PC-9 (cell line): ENCODE measurements at regions of chr19 and their contacts with region 1.

Region 1: DNA sequence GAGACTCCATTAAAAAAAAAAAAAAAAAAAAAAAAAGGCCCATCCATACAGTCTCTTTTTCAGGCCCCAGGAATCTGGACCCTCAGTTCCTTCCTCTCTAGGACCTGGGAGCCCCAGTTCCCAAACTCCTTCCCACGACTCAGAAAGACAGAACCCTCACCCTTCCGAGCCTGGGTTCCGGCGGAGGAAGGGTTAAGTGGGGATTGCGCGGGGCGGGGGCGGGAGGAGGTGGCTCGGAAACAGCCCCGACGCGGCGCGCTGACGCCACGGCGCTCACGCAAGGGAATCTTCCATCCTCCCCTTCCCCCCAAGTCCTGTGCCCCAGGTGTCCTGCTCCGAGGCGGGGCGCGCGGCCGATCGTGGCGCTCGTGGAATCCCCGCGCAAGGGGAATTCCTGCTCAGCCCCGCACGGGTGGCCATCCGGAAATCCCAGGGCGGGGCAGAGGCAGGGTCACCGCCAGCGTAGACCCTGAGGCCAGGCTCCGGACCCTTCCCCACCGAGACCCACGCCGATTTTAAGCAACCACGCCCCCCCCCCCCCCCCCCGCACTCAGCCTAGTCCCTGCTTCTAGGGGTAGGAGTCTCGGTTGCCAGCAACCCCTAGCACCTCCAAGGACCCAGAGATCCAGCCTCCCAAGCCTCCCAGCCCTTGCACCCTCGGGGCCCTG is 659 bp downstream of the NFKBID start:
- DNase-seq: peak; percentile 62 to 74
- H3K4me3 ChIP-seq: peak overlapping the region; percentile 79
- H3K27ac ChIP-seq: peak overlapping the region; percentile 50
- H3K4me1 ChIP-seq: peaks cover 8% of the 10 kb centered on the region; the same call in 1 of the 2 replicates
- H3K27me3 ChIP-seq: no peaks in the 10 kb centered on the region
- CTCF ChIP-seq: no peak

Region 2: DNA sequence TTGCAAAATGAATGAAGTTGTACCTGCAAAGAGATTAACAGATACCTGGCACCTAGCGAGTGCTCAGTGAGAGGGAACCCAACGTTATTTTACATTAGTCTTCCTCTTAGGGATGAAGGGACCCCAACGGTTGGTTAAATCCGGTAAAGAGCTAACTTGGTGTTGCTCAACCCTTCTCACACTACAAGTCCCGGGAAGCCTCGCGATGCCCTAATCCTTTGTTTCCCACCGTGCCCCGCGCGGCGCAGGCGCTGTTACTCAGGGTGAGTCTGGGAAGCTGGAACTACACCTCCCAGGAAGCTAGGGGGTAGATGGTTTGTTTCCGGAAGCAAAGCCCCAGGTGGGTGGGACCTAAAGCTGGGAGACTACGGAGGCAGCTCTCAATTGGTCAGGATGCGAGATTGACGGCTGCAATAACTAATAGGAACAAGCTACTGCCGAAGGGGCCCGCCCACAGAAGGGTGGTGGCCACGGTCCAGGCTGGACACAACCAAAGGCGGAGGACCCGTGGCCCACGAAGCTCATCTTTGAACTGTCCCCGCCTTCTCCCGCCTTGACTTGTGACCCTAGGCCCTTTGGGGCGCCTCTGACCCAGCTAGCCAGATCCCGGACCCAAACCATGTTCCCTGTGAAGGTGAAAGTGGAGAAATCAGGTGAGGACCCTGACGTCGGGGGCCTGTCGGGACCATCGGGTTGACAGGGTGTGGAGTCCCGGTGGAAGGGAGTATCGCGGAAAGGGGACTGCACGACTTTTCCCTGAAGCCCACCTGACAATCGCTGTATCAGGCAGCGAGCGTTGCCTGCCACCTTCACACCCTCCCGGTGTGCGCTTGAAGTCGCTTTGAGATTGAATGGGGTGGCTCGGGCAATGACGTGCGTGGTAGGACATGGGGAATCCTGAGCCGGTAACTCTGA is 151.3 kb before region 1 on chr19 and contains the start of gene LIN37:
- CTCF ChIA-PET with region 1: no interaction called
- POLR2A ChIA-PET with region 1: interaction called, 27 read pairs
- intact Hi-C with region 1: loop called (anchors 10 kb)
- DNase-seq: peak; percentile 98 to 99
- H3K4me3 ChIP-seq: peak within 1 kb of the TSS; percentile 97
- H3K27ac ChIP-seq: no peak within 1 kb of the TSS
- H3K4me1 ChIP-seq: peaks cover 36% of the 10 kb centered on the region
- H3K27me3 ChIP-seq: no peaks in the 10 kb centered on the region
- CTCF ChIP-seq: no peak
- total RNA-seq, gene LIN37: 9.4 and 17.0 TPM in 2 replicates

Region 3: GRCh38 chr19:35828692-35829301 is 70.9 kb before region 1 on chr19:
- CTCF ChIA-PET with region 1: no interaction called
- POLR2A ChIA-PET with region 1: no interaction called
- intact Hi-C with region 1: no loop called
- DNase-seq: peak in 1 of 2 experiments; percentile 35
- H3K4me3 ChIP-seq: no peak overlapping the region
- H3K27ac ChIP-seq: no peak overlapping the region
- H3K4me1 ChIP-seq: no peaks in the 10 kb centered on the region
- H3K27me3 ChIP-seq: peaks cover 80% of the 10 kb centered on the region
- CTCF ChIP-seq: no peak

Region 4: GRCh38 chr19:35938282-35939224 is 38.9 kb after region 1 on chr19:
- CTCF ChIA-PET with region 1: no interaction called
- POLR2A ChIA-PET with region 1: no interaction called
- intact Hi-C with region 1: no loop called
- DNase-seq: no peak
- H3K4me3 ChIP-seq: no peak overlapping the region
- H3K27ac ChIP-seq: no peak overlapping the region
- H3K4me1 ChIP-seq: peaks cover 24% of the 10 kb centered on the region
- H3K27me3 ChIP-seq: no peaks in the 10 kb centered on the region
- CTCF ChIP-seq: no peak